SK-N-SH (cell line): ENCODE measurements at regions of chr14 and their contacts with region 1.

Region 1: DNA sequence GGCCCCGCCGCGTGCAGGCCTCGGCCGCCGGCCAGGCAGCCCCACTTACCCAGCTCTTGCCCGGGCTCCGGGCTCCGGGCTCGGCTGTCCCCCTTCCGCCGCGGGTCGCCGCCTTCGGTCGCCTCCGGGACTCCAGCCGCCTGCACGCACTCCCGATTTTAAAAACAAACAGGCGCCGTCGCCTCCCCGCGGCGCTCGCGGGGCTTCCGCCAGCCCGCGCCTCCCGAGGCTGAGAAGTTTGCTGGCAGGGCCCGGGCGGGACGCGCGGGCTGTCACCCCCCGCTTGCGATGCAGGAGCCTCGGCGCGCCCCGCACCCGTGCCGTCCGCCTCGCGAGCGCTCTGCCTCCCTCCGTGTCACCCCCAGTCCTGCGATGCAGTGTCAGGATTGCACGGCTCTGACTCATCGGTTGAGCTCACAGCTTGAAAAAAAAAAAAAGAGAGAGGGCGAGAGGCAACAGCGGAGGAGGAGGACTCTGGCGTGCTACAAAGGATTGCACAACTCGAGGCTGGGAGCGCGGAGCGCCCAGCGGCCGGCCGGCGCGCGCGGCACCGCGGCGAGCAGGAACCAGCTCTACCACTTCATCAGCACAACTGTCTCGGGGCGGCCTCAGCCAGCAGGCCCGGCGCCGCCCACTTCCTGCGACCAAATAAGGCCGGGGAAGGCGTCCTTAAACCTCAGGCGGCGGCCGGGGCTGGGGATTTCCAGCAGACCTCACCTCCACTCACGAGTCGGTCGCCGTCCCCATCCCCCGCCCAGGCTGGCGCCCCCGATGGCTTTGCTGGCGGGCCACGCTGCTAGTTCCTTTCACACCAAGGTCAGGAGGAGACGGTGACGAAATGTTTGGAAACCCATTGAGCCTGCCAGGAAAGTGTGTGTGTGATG is 45.8 kb upstream of the PNMA1 start:
- DNase-seq: peak; percentile 92
- H3K4me3 ChIP-seq: peak overlapping the region; percentile 67 to 72
- H3K27ac ChIP-seq: peak overlapping the region; percentile 85 to 96
- H3K4me1 ChIP-seq: peaks cover 46 to 61% of the 10 kb centered on the region in 2 experiments
- H3K27me3 ChIP-seq: no peaks in the 10 kb centered on the region
- CTCF ChIP-seq: no peak; the same call in 1 of the 2 replicates
- EP300 ChIP-seq: peak in 1 of 2 experiments; percentile 28; a peak in 1 of 4 replicates
- RAD21 ChIP-seq: no peak

Region 2: DNA sequence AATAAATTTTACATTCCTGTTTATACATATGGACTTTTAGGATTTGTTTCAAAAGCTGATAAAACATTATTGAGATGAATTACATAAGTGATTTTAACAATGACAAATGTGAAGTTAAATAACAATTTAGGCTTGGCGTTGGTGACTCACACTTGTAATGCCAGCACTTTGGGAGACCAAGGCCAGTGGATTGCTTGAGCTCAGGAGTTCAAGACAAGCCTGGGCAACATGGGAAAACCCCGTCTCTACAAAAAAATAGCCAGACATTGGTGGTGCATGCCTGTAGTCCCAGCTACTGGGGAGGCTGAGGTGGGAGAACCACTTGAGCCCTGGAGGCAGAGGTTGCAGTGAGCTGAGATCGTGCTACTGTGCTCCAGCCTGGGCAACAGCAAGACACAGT is 183.6 kb before region 1 on chr14:
- CTCF ChIA-PET with region 1: no interaction called
- POLR2A ChIA-PET with region 1: no interaction called
- DNase-seq: no peak
- H3K4me3 ChIP-seq: no peak overlapping the region
- H3K27ac ChIP-seq: no peak overlapping the region
- H3K4me1 ChIP-seq: no peaks in the 10 kb centered on the region
- H3K27me3 ChIP-seq: no peaks in the 10 kb centered on the region
- CTCF ChIP-seq: no peak
- EP300 ChIP-seq: no peak
- RAD21 ChIP-seq: no peak

Region 3: DNA sequence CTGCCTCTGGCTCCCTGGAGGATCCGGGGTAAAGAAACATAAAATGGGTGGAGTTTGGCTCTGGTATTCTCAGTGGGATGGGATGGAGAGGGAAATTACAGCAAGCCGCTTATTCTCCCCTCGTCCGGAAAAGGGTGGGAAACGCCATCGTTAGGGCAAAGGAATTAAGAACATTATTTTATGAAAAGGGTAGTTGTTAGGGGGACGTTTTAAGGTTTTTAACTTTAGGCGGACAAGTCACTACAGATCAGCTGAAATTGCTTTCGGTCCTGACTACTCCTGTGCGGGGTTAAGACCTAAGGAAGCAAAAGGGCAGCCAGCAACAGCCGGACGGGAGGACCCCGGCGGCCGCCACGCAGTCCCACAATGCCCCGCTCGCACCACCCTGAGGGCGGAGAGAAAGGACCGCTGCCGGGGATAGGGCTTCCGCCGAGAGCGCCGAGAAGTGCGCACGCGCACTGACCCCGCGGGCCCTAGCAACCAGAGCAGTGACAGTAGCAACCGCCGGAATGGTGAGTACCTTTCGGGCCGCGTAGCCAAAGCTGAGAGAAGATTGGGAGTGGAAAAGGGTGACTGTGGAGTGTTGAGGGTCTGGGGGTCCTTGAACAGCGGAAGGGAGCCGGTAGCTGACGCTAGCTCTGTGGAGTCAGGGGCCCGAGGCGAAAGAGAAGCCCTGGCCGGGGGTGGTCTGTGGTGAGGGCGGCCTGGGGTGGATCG is 115.3 kb before region 1 on chr14 and contains the start of gene DNAL1:
- CTCF ChIA-PET with region 1: no interaction called
- POLR2A ChIA-PET with region 1: no interaction called
- DNase-seq: peak; percentile 95
- H3K4me3 ChIP-seq: peak within 1 kb of the TSS; percentile 77 to 99
- H3K27ac ChIP-seq: peak within 1 kb of the TSS; percentile 93 to 95
- H3K4me1 ChIP-seq: peaks cover 0 to 14% of the 10 kb centered on the region in 2 experiments; a peak in 1 of 4 replicates
- H3K27me3 ChIP-seq: no peaks in the 10 kb centered on the region
- CTCF ChIP-seq: no peak
- EP300 ChIP-seq: no peak
- RAD21 ChIP-seq: peak; percentile 6; the same call in 1 of the 2 replicates
- polyA plus RNA-seq, gene DNAL1: 2.6 and 3.6 TPM in 2 replicates

Region 4: DNA sequence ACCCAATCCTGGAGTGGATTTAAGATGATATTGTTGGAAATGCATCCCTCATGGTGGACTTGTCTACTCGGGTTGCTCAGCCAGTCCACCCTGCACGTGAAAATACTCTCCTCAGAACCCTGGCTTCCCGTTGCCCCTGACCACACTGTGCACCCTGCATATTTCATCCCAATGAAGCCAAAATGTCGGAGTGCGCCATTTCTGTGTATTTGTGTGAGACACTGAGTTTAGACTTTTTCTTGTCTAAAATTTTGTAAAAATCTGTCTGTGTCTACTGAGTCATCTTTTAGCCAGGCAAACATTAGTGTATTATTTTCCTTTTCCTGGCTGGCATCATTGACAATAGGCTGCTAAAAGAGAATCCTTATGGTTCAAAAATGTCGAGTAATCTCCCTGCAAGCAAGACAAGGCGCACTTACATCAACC is 45.3 kb before region 1 on chr14:
- CTCF ChIA-PET with region 1: interaction called, 10 read pairs
- POLR2A ChIA-PET with region 1: no interaction called
- DNase-seq: peak; percentile 75
- H3K4me3 ChIP-seq: peak overlapping the region; percentile 79 to 83
- H3K27ac ChIP-seq: peak overlapping the region; percentile 86 to 90
- H3K4me1 ChIP-seq: peaks cover 0 to 38% of the 10 kb centered on the region in 2 experiments; a peak in 3 of 4 replicates
- H3K27me3 ChIP-seq: no peaks in the 10 kb centered on the region
- CTCF ChIP-seq: no peak
- EP300 ChIP-seq: no peak
- RAD21 ChIP-seq: no peak

Region 5: DNA sequence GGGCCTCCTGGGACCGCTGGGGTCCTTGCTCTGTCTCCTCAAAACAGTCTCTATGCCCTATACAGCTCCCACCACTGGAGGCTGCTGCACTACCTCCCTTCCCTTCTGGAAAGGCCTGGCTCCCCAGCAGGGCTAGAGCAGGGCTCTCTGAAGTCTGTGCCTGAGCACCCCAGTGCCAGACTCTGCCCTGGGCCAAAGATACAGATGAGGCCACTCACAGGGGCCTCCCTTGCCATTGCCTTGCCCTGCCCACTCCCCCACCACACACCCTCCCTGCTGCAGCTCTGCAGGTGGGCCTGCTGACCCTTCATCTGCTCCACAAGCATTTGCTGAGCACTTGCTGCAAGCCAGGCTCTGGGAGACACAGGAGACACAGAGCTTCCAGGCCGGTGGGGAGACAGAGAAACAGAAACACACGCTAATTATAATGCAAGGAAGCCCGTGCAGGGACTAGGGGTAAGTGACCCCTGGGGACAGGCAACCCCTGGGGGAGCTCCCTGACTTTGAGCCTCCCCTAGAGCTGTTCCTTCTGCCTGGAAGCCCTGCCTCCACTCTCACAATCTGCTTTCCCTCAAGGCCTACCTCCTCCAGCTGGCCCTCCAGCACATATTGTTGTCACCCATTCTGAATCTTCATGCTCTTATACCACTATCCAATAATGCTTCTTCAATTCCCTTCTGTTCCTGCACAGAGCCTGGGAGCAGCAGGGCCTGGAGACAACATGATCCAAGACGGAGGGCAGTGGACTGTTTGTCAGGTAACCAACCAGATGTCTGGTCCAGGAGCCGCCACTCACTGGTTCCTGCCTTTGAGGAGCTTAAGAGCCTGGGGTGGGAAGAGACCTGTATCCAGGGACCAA is 13.2 kb before region 1 on chr14:
- CTCF ChIA-PET with region 1: interaction called, 13 read pairs
- POLR2A ChIA-PET with region 1: interaction called, 4 read pairs
- DNase-seq: peak; percentile 70
- H3K4me3 ChIP-seq: no peak overlapping the region
- H3K27ac ChIP-seq: peak overlapping the region in 1 of 2 experiments; percentile 51; a peak in 2 of 4 replicates
- H3K4me1 ChIP-seq: peaks cover 29 to 66% of the 10 kb centered on the region in 2 experiments; a peak in 3 of 4 replicates
- H3K27me3 ChIP-seq: no peaks in the 10 kb centered on the region
- CTCF ChIP-seq: peak; percentile 19
- EP300 ChIP-seq: no peak
- RAD21 ChIP-seq: peak; percentile 64

Region 6: DNA sequence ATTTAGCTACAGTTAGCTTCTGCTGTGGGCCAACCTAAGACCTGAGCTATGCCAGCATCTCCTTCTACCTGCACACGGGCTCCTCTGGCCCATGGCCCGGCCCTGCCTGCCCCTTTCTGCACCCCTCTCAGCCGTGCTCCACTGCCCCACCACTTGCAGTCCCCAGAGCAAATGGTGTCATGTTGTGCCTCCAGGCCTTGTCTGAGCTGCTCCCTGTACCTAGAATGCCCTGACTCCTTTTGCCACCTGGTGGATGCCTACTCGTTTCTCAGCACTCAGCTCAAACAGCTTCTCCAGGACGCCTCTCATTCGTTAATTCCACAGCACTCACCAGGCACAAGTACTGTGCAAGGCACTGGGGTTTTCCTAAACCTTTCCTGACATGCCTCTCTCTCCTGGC is 17.4 kb after region 1 on chr14:
- CTCF ChIA-PET with region 1: interaction called, 48 read pairs
- POLR2A ChIA-PET with region 1: interaction called, 3 read pairs
- DNase-seq: no peak
- H3K4me3 ChIP-seq: no peak overlapping the region
- H3K27ac ChIP-seq: no peak overlapping the region
- H3K4me1 ChIP-seq: peaks cover under 1 to 8% of the 10 kb centered on the region in 2 experiments
- H3K27me3 ChIP-seq: no peaks in the 10 kb centered on the region
- CTCF ChIP-seq: no peak
- EP300 ChIP-seq: no peak
- RAD21 ChIP-seq: no peak

Region 7: GRCh38 chr14:73816393-73816816 is 56.4 kb after region 1 on chr14:
- CTCF ChIA-PET with region 1: interaction called, 13 read pairs
- POLR2A ChIA-PET with region 1: no interaction called
- DNase-seq: no peak
- H3K4me3 ChIP-seq: no peak overlapping the region
- H3K27ac ChIP-seq: no peak overlapping the region
- H3K4me1 ChIP-seq: no peaks in the 10 kb centered on the region
- H3K27me3 ChIP-seq: 0 out of 2 replicates have a peak, but pooled peaks cover 7% of the 10 kb centered on the region
- CTCF ChIP-seq: no peak
- EP300 ChIP-seq: no peak
- RAD21 ChIP-seq: no peak